HepG2 (cell line): ENCODE measurements at regions of chr15 and their contacts with region 1.

Region 1: DNA sequence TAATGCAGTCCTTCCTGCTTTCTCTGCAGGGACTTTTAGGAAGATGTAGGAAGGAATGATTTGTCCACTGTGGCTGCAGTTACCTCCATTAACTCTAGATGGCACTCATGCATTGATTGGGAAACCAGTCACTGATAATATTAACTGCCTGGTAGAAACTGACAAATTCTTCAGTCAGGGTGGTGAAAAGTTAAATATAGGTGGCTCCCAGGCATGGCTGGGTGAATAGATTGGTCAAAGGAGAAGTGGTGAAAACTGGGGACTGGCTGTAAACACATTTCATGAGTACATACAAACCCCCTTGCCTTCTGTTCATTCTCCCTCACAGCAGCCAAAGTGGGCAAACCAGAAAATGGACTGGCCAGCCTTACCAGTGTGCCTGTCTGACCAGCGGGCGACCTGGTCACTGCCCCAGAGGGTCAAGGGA is 333.4 kb downstream of the THSD4 start:
- DNase-seq: peak; percentile 51
- ATAC-seq: no peak; the same call in 2 of the 3 replicates
- H3K4me3 ChIP-seq: no peak overlapping the region
- H3K27ac ChIP-seq: no peak overlapping the region
- H3K4me1 ChIP-seq: peaks cover 54% of the 10 kb centered on the region
- H3K27me3 ChIP-seq: peaks cover 0 to 7% of the 10 kb centered on the region in 2 experiments; a peak in 2 of 5 replicates
- CTCF ChIP-seq: peak; percentile 88
- EP300 ChIP-seq: no peak
- POLR2A ChIP-seq: no peak
- RAD21 ChIP-seq: peak; percentile 66

Region 2: DNA sequence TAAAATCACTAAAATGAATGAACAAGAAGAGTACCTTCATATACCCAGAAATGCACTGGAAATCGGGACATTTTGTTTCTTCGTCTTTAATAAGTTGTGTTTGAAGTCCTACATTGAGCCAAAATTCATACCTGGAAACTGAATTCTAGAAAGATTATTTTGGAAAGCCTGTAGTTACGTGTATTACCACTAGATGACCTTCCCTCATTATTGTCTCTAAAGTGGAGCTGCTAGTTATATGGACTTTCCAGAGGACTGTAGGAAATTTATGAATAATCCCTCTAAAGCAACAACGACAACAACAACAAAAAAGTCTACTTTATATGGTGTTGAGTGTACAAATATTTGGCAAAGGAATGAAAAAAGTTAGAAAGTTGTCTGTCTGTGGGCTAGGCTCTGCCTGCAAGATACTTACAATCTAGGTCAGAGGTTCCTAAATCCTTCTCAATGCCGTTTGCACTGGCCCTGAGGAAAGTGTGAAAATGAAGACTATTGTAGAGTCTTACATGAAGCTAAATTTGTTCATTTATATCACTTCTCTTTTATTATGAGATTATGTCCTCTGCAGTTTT is 126.9 kb after region 1 on chr15:
- CTCF ChIA-PET with region 1: no interaction called
- POLR2A ChIA-PET with region 1: no interaction called
- in situ Hi-C with region 1: no loop called
- intact Hi-C with region 1: loop called (anchors 10 kb)
- DNase-seq: peak; percentile 10
- ATAC-seq: no peak
- H3K4me3 ChIP-seq: no peak overlapping the region
- H3K27ac ChIP-seq: no peak overlapping the region
- H3K4me1 ChIP-seq: no peaks in the 10 kb centered on the region
- H3K27me3 ChIP-seq: no peaks in the 10 kb centered on the region
- CTCF ChIP-seq: peak; percentile 63
- EP300 ChIP-seq: no peak
- POLR2A ChIP-seq: no peak
- RAD21 ChIP-seq: peak; percentile 28; the same call in 1 of the 2 replicates

Region 3: DNA sequence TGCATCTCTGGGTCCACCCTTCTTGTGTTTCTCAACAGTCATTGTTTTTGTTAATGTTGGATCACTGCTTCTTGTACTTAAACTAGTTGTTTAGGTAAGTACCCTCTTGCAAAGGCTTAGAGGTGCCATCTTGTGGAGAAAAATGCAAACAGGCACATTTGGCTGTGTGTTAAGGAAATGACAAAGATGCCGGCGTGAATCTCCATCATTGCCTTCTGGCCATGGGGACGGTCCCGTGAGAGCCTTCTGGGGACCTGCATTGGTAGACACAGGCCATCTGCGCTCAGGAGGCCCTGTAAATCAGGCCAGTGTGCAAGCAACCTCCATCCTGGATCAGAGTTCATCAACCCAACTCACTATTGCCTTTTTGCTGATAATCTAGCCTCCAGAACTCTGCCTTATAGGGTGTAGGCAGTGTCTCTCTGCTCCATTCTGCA is 203.1 kb after region 1 on chr15:
- CTCF ChIA-PET with region 1: interaction called, 13 read pairs
- POLR2A ChIA-PET with region 1: no interaction called
- in situ Hi-C with region 1: no loop called
- intact Hi-C with region 1: loop called (anchors 1 kb)
- DNase-seq: peak; percentile 57
- ATAC-seq: peak; percentile 54; the same call in 2 of the 3 replicates
- H3K4me3 ChIP-seq: no peak overlapping the region; a peak in 1 of 6 replicates
- H3K27ac ChIP-seq: no peak overlapping the region
- H3K4me1 ChIP-seq: peaks cover 56% of the 10 kb centered on the region
- H3K27me3 ChIP-seq: peaks cover 0 to 8% of the 10 kb centered on the region in 2 experiments; a peak in 1 of 5 replicates
- CTCF ChIP-seq: peak; percentile 75
- EP300 ChIP-seq: no peak
- POLR2A ChIP-seq: no peak
- RAD21 ChIP-seq: peak; percentile 51

Region 4: DNA sequence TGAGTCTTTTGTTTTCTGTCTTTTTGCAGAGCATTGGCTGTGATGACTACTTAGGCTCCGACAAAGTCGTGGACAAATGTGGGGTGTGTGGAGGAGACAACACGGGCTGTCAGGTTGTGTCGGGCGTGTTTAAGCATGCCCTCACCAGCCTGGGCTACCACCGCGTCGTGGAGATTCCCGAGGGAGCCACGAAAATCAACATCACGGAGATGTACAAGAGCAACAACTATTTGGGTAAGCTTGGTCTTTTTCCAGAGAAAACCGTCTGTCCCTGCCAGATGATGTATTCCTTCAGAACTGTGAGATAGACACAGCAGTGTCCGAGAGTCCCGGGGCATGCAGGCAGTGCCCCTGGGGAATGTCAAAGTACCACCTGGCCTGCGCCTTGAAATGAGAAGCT is 211.8 kb after region 1 on chr15:
- CTCF ChIA-PET with region 1: no interaction called
- POLR2A ChIA-PET with region 1: no interaction called
- in situ Hi-C with region 1: loop called (anchors 5 kb)
- intact Hi-C with region 1: no loop called
- DNase-seq: no peak
- ATAC-seq: peak; percentile 29; the same call in 2 of the 3 replicates
- H3K4me3 ChIP-seq: peak overlapping the region in 1 of 3 experiments; percentile 2; a peak in 1 of 6 replicates
- H3K27ac ChIP-seq: peak overlapping the region; percentile 84
- H3K4me1 ChIP-seq: peaks cover 83% of the 10 kb centered on the region
- H3K27me3 ChIP-seq: no peaks in the 10 kb centered on the region
- CTCF ChIP-seq: no peak
- EP300 ChIP-seq: no peak
- POLR2A ChIP-seq: no peak
- RAD21 ChIP-seq: no peak

Region 5: DNA sequence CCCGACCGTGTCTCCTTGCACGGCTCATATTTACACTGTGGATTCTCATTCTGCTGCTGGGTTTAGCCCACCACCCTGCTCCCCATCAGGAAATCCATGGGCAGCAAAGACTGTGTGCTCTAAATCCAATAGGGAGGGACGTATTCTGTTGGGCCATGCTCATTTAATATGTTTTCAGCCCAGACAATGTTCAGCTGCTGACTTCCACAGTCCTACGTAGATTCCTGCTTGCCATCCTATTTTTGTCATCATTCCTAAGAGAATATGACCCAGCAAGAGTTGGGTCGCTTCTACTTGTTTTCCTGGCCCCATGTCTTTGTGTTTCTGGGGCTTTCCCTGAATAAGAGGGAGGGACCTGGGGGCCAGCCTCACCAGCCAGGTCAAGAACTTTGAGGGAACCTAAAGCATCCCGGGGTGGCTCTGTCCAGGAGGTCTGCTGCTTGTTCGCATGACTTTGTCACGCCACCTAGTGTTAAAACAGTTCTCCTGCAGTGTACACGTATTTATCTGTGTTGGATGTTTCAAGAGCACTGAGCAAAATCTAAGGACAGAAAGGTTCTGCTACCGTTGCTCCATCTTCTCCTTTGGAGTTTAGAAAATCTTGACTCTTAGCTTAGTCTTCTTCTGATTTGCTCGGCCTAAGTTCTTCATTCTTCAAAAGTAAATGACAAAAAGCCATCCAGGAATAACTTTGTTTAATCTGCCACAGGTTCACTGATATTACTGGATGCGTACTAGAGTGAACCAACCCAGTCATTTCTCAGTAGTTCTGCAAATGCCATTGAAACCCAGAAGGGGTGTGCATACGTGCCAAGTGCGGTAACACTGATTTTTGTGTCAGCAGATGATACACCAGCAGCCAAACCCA is 281.8 kb after region 1 on chr15:
- CTCF ChIA-PET with region 1: interaction called, 18 read pairs
- POLR2A ChIA-PET with region 1: no interaction called
- in situ Hi-C with region 1: loop called (anchors 5 kb)
- intact Hi-C with region 1: loop called (anchors 2 kb)
- DNase-seq: peak; percentile 50
- ATAC-seq: peak; percentile 90
- H3K4me3 ChIP-seq: no peak overlapping the region
- H3K27ac ChIP-seq: no peak overlapping the region
- H3K4me1 ChIP-seq: peaks cover 25% of the 10 kb centered on the region
- H3K27me3 ChIP-seq: peaks cover 2 to 5% of the 10 kb centered on the region in 2 experiments; a peak in 2 of 5 replicates
- CTCF ChIP-seq: peak; percentile 89
- EP300 ChIP-seq: no peak
- POLR2A ChIP-seq: no peak
- RAD21 ChIP-seq: peak; percentile 79

Region 6: GRCh38 chr15:71736286-71736947 is 287.7 kb after region 1 on chr15:
- CTCF ChIA-PET with region 1: interaction called, 18 read pairs
- POLR2A ChIA-PET with region 1: no interaction called
- in situ Hi-C with region 1: loop called (anchors 5 kb)
- intact Hi-C with region 1: loop called (anchors 2 kb)
- DNase-seq: no peak
- ATAC-seq: no peak
- H3K4me3 ChIP-seq: no peak overlapping the region
- H3K27ac ChIP-seq: no peak overlapping the region
- H3K4me1 ChIP-seq: peaks cover 42% of the 10 kb centered on the region
- H3K27me3 ChIP-seq: peaks cover 2 to 25% of the 10 kb centered on the region in 2 experiments; a peak in 3 of 5 replicates
- CTCF ChIP-seq: no peak
- EP300 ChIP-seq: no peak
- POLR2A ChIP-seq: no peak
- RAD21 ChIP-seq: no peak